Activated naive CD4-positive, alpha-beta T cell treated with anti-CD3 and anti-CD28 coated beads for 36 hours (primary cell): ENCODE measurements at regions of chr16 and their contacts with region 1.

Region 1: GRCh38 chr16:85610508-85611332 is 2.4 kb upstream of the GSE1 start:
- DNase-seq: peak; percentile 91
- H3K4me3 Mint-ChIP-seq: peak overlapping the region; percentile 65
- H3K27ac Mint-ChIP-seq: no peak overlapping the region
- H3K4me1 Mint-ChIP-seq: peaks cover 21% of the 10 kb centered on the region
- H3K27me3 Mint-ChIP-seq: peaks cover 6% of the 10 kb centered on the region

Region 2: DNA sequence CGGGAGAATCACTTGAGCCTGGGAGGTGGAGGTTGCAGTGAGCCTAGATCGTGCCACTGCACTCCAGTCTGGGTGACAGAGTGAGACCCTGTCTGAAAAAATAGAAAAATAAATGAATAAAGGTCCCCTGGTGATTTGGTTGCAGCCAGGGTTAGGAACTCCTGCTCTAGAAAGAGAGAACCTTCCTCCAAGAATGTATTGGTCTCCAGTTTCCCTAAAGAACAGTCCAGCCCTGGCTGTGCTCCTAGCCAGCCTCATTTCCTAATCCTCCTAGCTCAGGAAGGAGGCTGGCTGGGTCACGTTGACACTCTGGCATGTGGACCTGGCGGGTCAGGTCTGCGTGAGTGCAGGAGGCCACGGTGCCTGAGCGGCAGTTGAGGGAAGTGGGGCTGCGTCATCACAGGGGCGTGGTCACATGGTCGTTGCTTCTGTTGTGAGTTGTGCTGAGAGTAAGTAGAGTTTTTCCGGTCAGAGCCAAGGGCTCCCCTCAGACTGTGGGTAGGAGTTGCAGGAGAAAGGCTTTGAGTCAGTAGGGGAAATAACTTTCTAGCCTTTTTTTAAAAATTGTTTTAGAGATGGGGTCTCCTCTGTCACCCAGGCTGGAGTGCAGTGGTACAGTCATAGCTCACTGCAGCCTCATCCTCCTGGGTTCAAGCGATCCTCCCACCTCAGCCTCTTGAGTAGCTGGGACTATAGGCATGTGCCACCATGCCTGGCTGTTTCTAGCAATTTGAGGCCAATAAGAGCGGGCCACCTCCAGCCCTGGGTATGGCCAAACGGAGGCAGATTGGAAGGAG is 304.5 kb before region 1 on chr16:
- CTCF ChIA-PET with region 1: interaction called, 5 read pairs
- intact Hi-C with region 1: loop called (anchors 1 kb)
- DNase-seq: peak; percentile 98
- H3K4me3 Mint-ChIP-seq: peak overlapping the region; percentile 42
- H3K27ac Mint-ChIP-seq: peak overlapping the region; percentile 78
- H3K4me1 Mint-ChIP-seq: peaks cover 66% of the 10 kb centered on the region
- H3K27me3 Mint-ChIP-seq: no peaks in the 10 kb centered on the region

Region 3: DNA sequence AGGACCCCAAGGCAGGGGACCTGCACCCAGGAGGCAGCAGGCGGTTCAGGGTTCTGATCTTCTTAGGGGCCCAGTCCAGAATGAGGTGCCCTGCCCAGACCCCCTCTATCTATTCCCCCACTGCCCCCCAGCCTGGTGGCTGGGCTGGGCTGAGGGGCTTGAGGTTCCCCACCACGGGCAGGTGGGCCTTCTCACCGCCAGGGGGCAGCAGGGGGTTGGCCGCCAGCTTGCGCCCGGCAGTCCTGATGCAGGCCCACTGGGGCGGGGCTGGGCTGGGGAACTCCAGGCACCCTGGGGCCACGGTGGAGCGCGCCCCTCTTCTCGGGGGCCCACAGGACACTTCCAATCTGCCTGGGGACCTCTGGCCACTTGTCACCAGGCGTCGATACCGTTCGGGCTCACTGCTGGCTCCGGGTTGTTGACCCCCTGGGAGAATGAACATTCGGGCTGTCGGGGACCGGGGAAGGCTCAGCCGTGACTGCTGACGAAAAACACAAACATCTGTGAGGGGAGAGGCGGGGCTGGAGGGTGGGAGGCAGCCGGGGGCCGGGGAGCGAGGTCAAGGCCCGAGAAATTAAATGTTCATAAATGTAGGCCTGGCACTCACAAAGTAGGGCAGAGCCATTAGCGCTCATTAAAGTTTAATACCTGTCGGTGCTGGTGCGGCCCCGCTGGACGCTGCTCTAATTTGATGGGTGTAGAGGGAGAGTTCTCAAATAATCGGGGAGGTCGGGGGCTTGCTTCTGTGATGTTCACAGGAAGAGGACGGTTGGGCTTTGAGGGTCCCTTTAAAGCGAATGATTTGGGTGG is 216.8 kb before region 1 on chr16:
- CTCF ChIA-PET with region 1: interaction called, 9 read pairs
- intact Hi-C with region 1: loop called (anchors 1 kb)
- DNase-seq: peak; percentile 68
- H3K4me3 Mint-ChIP-seq: no peak overlapping the region
- H3K27ac Mint-ChIP-seq: no peak overlapping the region
- H3K4me1 Mint-ChIP-seq: no peaks in the 10 kb centered on the region
- H3K27me3 Mint-ChIP-seq: no peaks in the 10 kb centered on the region

Region 4: GRCh38 chr16:85428168-85428898 is 182.4 kb before region 1 on chr16:
- CTCF ChIA-PET with region 1: interaction called, 55 read pairs
- intact Hi-C with region 1: no loop called
- DNase-seq: peak; percentile 64
- H3K4me3 Mint-ChIP-seq: no peak overlapping the region
- H3K27ac Mint-ChIP-seq: no peak overlapping the region
- H3K4me1 Mint-ChIP-seq: no peaks in the 10 kb centered on the region
- H3K27me3 Mint-ChIP-seq: no peaks in the 10 kb centered on the region

Region 5: DNA sequence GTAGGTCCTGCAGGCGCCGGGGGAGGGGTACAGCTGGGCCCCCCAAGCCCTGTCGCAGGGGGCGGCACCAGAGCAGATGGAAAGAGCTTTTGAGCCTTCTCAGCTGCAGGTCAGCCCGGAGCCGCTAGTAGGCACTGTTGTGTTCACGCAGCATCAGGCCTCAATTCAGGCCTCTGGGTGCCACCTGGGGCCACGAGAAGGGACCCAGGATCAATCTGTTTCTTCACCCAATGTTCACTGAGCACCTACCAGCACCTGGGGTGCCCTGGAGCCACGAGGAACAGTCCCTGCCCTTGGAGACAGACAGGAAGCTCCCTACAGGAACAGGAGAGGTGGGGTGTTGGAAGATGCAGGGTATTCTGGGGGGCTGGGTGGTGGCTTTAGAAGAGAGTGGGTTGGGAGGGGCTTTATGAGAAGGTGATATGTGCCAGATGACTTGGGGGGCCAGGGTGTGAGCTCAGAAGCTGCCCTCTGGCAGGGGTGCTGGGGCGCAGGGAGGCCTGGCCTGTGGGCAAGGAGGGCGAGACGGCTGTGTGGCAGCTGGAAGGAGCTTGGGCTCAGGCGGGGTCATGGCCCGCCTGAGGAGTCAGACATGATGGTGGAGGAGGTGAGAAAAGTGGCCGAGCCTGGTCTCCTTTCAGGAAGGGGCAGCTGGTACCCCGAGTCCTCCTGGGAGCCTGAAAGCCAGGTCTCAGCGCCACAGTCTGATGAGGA is 119.5 kb before region 1 on chr16:
- CTCF ChIA-PET with region 1: interaction called, 21 read pairs
- intact Hi-C with region 1: loop called (anchors 1 kb)
- DNase-seq: peak; percentile 56
- H3K4me3 Mint-ChIP-seq: no peak overlapping the region
- H3K27ac Mint-ChIP-seq: no peak overlapping the region
- H3K4me1 Mint-ChIP-seq: peaks cover 4% of the 10 kb centered on the region
- H3K27me3 Mint-ChIP-seq: no peaks in the 10 kb centered on the region

Region 6: DNA sequence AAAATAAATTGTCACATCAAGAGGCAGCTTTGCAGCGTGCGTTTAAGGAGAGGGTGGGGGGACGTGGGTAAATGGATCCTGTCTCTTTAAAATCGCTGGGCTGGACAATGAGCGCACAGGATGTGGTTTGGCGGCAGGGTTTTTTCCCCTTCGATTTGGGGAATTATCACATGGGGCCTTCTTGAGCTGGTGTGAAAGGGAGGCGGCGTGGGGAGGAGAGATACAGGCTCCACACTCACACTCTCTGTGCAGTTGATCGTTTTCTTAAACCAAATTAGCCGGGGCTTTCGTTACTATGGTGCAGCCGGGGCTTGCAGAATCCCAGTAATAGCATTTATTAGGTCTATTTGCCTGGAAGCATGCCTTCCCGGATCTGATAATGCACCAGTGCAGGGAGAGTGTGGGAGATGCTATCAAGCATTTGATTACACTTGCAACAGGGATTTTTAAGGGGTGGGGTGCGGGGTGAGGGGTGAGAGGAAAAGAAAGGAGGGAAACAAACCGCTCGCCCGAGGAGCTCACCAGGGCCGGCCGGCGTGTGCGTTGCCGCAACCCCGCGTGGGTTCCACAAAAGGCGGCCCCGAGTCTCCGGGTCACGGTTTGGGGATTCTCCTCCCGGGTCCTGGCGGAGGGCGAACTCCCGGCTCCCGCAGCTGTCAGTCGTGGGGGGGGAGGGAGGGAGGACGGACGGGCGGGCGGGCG is 56.5 kb before region 1 on chr16:
- CTCF ChIA-PET with region 1: interaction called, 29 read pairs
- intact Hi-C with region 1: loop called (anchors 1 kb)
- DNase-seq: peak; percentile 93
- H3K4me3 Mint-ChIP-seq: peak overlapping the region; percentile 79
- H3K27ac Mint-ChIP-seq: peak overlapping the region; percentile 93
- H3K4me1 Mint-ChIP-seq: peaks cover 42% of the 10 kb centered on the region
- H3K27me3 Mint-ChIP-seq: no peaks in the 10 kb centered on the region

Region 7: DNA sequence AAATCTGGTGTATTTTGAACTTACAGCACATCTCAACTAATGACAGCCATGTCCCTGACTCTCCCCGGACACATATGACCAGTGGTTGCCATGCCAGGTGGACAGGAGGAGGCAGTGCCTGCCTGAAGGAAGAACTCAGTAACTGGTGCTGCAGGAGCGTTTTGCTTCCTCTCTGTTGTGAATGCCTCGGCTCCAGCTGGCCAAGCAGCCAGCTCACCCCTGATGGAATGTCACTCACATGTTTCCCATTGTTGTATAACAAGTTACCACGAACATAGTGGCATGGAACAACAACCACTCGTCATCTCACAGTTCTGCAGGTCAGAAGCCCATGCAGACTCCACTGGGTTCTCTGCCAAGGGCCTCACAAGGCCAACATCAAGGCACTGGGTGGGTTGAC is 268.2 kb after region 1 on chr16:
- CTCF ChIA-PET with region 1: no interaction called
- intact Hi-C with region 1: no loop called
- DNase-seq: no peak
- H3K4me3 Mint-ChIP-seq: no peak overlapping the region
- H3K27ac Mint-ChIP-seq: no peak overlapping the region
- H3K4me1 Mint-ChIP-seq: peaks cover 43% of the 10 kb centered on the region
- H3K27me3 Mint-ChIP-seq: peaks cover 7% of the 10 kb centered on the region

Region 8: DNA sequence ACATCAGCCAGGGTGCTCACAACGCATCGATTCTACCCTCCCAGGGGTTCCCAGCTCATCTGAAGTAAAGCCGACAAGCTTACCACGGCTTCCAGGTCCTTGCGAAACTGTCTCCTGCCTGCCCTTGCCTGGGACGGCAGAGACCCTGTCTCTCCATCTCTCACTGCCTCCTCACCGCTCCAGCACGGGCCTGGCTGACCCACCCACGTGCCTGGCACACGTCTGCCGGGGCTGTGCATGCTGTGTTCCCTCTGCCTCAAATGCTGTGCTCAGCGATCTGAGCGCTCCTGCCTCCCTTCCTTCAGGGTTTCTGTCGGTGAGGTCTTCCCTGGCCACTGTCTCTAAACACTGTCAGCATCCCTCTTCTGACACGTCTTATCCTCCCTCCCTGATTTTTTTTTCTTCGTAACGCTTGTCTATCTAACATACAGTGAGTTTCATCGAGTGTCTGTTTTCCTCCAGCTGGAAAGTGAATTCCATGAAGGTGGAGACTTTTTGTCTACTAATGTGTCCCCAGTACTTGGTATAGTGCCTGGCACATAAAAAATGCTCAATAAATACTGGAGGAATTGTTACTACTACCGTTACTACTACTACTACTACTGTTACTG is 496.6 kb after region 1 on chr16:
- CTCF ChIA-PET with region 1: no interaction called
- intact Hi-C with region 1: no loop called
- DNase-seq: no peak
- H3K4me3 Mint-ChIP-seq: no peak overlapping the region
- H3K27ac Mint-ChIP-seq: no peak overlapping the region
- H3K4me1 Mint-ChIP-seq: no peaks in the 10 kb centered on the region
- H3K27me3 Mint-ChIP-seq: no peaks in the 10 kb centered on the region